ENCODE measurements at regions of chr1 and their contacts with region 1.

Region 1: DNA sequence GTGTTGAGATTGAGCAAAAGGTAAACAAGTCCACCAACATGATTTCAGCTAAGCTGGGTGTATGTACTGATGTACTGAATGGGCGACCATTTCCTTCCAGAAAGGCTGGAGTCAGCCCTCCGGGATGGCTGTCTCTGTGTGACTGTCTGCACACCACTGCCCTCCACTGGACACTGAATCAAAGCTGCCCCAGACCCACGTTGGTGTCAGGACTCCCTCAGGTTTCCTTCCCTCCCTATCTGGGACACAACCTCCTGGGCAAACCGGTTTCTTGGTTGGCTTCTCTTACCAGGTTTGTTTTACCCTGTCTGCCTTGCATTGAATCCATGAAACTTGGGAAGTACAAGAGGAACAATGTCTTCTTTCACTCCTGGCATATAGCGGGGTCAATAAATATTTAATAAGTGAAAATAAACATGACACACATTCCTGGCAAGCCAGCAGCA is 5.3 kb upstream of the SRP9 start:
- DNase-seq: peak; percentile 76 to 78
- ATAC-seq: peak; percentile 83 to 89
- H3K4me3 ChIP-seq: no peak overlapping the region
- H3K27ac ChIP-seq: peak overlapping the region in 2 of 4 donors; percentile 25 to 59
- H3K4me1 ChIP-seq: peaks cover 21 to 29% of the 10 kb centered on the region in 2 donors
- H3K27me3 ChIP-seq: no peaks in the 10 kb centered on the region
- CTCF ChIP-seq: peak; percentile 79 to 92 (median 88)
- POLR2A ChIP-seq: no peak

Region 2: GRCh38 chr1:225480825-225481434 is 291.4 kb before region 1 on chr1:
- in situ Hi-C with region 1: loop called (anchors 5 to 10 kb)
- intact Hi-C with region 1: no loop called
- DNase-seq: peak in 1 of 2 donors; percentile 42
- ATAC-seq: peak; percentile 48 to 71
- H3K4me3 ChIP-seq: no peak overlapping the region
- H3K27ac ChIP-seq: no peak overlapping the region
- H3K4me1 ChIP-seq: peaks cover 0 to 4% of the 10 kb centered on the region in 2 donors
- H3K27me3 ChIP-seq: no peaks in the 10 kb centered on the region
- CTCF ChIP-seq: peak; percentile 57 to 80 (median 63)
- POLR2A ChIP-seq: no peak

Region 3: DNA sequence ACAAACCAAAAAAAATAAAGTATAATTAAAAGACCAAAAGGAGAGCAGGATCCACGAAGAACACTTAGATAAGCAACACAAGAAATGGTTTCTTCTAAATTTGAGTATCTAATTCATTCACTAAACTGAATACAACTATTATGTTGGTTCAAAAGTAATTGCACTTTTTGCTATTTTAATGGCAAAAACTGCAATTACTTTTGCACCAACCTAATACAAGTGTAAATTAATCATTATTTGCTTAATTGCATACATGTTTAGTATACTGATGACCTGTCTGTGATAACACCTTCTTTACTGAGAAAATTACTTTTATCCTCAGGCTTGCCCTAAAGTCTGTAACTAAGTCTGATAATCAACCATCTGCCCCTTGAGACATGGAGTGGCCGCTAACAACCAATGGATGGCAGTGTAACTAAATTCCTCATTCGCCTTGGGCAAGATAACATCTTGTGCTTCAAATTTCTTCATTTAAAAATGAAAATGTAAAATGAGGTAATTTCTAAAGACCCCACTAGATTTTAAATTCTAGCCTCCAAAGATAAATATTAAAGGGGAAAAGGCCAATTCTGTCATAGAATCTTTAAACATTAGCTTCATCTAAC is 204.7 kb before region 1 on chr1:
- in situ Hi-C with region 1: no loop called
- intact Hi-C with region 1: loop called (anchors 5 kb)
- DNase-seq: no peak
- ATAC-seq: no peak
- H3K4me3 ChIP-seq: no peak overlapping the region
- H3K27ac ChIP-seq: no peak overlapping the region
- H3K4me1 ChIP-seq: peaks cover 32 to 36% of the 10 kb centered on the region in 2 donors
- H3K27me3 ChIP-seq: no peaks in the 10 kb centered on the region
- CTCF ChIP-seq: no peak
- POLR2A ChIP-seq: no peak

Region 4: DNA sequence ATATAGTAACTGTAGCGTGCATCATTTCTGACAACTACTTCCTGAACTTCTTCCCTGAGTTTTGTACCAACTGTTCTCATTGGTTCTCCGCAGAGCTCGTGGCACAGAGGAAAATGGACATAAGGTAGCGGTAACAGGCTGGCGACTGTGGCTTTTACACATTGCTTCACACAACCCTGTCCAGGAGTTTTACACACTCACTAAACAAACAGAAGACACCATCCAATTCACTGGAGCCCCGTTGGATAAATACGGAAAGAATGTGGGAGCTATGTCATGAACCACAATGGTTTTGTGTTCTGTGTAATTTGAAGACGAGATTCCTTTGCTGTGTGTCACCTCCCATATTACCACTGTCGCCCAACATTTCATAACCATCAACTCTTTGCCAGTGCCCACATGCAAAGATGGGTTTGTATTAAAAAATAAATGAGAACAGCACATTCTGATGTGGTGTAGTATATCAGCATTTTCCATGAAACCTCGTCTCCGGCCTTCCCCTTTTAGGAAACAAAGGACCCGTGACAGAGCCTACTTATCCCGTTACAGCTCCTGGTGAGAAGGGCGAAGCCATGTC is 72.1 kb before region 1 on chr1:
- in situ Hi-C with region 1: no loop called
- intact Hi-C with region 1: loop called (anchors 5 kb)
- DNase-seq: peak; percentile 58 to 60
- ATAC-seq: peak; percentile 89 to 90
- H3K4me3 ChIP-seq: peak overlapping the region; percentile 41 to 57 (median 50)
- H3K27ac ChIP-seq: peak overlapping the region; percentile 85 to 93 (median 87)
- H3K4me1 ChIP-seq: peaks cover 13 to 27% of the 10 kb centered on the region in 2 donors
- H3K27me3 ChIP-seq: no peaks in the 10 kb centered on the region
- CTCF ChIP-seq: no peak
- POLR2A ChIP-seq: no peak

Region 5: GRCh38 chr1:225794954-225795353 is 22.6 kb after region 1 on chr1:
- in situ Hi-C with region 1: no loop called
- intact Hi-C with region 1: no loop called
- DNase-seq: no peak
- ATAC-seq: no peak
- H3K4me3 ChIP-seq: no peak overlapping the region
- H3K27ac ChIP-seq: no peak overlapping the region
- H3K4me1 ChIP-seq: no peaks in the 10 kb centered on the region
- H3K27me3 ChIP-seq: no peaks in the 10 kb centered on the region
- CTCF ChIP-seq: no peak
- POLR2A ChIP-seq: no peak

Region 6: DNA sequence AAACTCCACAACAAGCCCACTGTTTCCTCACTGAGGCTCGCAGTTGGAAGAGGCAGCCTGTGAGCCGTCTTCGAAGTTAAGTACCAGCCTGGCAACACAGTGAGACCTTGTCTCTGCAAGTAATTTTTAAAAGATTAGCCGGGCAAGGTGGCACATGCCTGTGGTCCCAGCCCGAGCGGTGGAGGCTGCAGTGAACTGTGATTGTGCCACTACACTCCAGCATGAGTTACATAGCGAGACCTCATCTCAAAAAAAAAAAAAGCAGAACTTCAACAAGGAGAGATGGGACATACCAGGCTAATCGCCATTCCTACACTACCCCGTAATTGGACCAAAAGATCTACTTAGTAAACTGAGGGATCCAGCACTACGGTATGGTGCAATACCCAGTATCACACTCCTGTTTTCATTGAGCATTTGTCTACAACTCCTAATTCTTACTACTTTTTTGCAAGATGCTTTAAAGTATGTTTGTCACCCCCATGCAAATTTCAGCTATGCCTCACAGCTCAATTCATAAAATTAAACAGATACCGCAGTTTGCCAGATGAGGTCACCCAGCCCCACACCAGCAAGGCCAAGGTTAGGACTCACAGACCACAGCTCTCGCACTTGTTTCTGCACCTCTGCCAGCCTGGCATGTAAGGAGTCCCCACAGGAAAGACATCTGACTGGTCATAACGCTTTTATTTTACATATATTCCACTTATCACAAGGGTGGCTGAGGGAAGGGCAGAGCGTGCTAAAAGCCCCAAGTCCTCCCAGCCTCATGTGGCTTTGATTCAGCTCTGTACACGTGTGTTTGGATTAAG is 205.8 kb after region 1 on chr1:
- in situ Hi-C with region 1: loop called in 3 of 4 experiments (anchors 10 kb)
- intact Hi-C with region 1: loop called (anchors 2 kb)
- DNase-seq: no peak
- ATAC-seq: no peak
- H3K4me3 ChIP-seq: no peak overlapping the region
- H3K27ac ChIP-seq: no peak overlapping the region
- H3K4me1 ChIP-seq: peaks cover 13 to 17% of the 10 kb centered on the region in 2 donors
- H3K27me3 ChIP-seq: no peaks in the 10 kb centered on the region
- CTCF ChIP-seq: no peak
- POLR2A ChIP-seq: no peak